ENCODE measurements at regions of chr19 and their contacts with region 1.

Region 1: DNA sequence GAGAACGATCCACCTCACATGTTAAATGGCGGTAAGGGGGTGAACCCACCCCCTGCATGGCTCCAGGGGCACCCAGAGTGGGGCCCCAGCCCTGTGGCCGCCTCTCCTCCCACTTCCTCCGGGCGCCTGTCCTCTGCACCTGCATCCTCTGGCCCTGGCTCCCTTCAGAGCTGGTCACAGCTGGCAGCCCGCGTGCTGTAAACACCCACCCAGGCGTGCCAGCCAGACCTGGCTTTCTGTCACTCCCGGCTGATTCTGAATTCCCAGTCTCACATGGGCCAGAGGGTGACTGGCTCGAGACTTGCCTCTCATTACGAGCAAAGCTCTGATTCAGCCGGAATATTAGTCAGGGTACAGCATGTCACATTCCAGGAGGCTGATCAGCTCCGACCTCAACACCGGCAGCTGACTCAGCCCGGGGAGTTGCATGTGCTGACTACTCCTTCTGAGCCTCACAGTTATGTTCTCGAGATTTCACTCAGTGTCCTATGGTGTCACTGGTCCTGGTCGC is 75.1 kb downstream of the GNG7 start:
- DNase-seq: peak; percentile 88
- ATAC-seq: peak; percentile 62
- H3K4me3 ChIP-seq: peak overlapping the region in 4 of 5 experiments; percentile 13 to 47 (median 24)
- H3K4me3 Mint-ChIP-seq: peak overlapping the region; percentile 86
- H3K27ac ChIP-seq: peak overlapping the region; percentile 96 to 97
- H3K27ac Mint-ChIP-seq: peak overlapping the region; percentile 98
- H3K4me1 ChIP-seq: peaks cover 93 to 99% of the 10 kb centered on the region in 2 donors
- H3K4me1 Mint-ChIP-seq: peaks cover 90% of the 10 kb centered on the region
- H3K27me3 ChIP-seq: no peaks in the 10 kb centered on the region
- H3K27me3 Mint-ChIP-seq: no peaks in the 10 kb centered on the region
- CTCF ChIP-seq: no peak

Region 2: GRCh38 chr19:1384478-1385110 is 1242.8 kb before region 1 on chr19:
- CTCF ChIA-PET with region 1: no interaction called
- POLR2A ChIA-PET with region 1: no interaction called
- intact Hi-C with region 1: no loop called
- DNase-seq: peak; percentile 49
- ATAC-seq: no peak
- H3K4me3 ChIP-seq: peak overlapping the region; percentile 17 to 93 (median 76)
- H3K4me3 Mint-ChIP-seq: peak overlapping the region; percentile 90
- H3K27ac ChIP-seq: peak overlapping the region; percentile 44 to 85
- H3K27ac Mint-ChIP-seq: peak overlapping the region; percentile 22
- H3K4me1 ChIP-seq: peaks cover 11 to 15% of the 10 kb centered on the region in 2 donors
- H3K4me1 Mint-ChIP-seq: peaks cover 17% of the 10 kb centered on the region
- H3K27me3 ChIP-seq: no peaks in the 10 kb centered on the region
- H3K27me3 Mint-ChIP-seq: peaks cover 3% of the 10 kb centered on the region
- CTCF ChIP-seq: no peak

Region 3: GRCh38 chr19:2084993-2085720 is 542.2 kb before region 1 on chr19:
- CTCF ChIA-PET with region 1: no interaction called
- POLR2A ChIA-PET with region 1: interaction called, 4 read pairs
- intact Hi-C with region 1: loop called (anchors 10 kb)
- DNase-seq: peak; percentile 97
- ATAC-seq: peak; percentile 29
- H3K4me3 ChIP-seq: peak overlapping the region; percentile 87 to 100 (median 98)
- H3K4me3 Mint-ChIP-seq: peak overlapping the region; percentile 92
- H3K27ac ChIP-seq: peak overlapping the region; percentile 96 to 99
- H3K27ac Mint-ChIP-seq: peak overlapping the region; percentile 99
- H3K4me1 ChIP-seq: peaks cover 74 to 81% of the 10 kb centered on the region in 2 donors
- H3K4me1 Mint-ChIP-seq: peaks cover 79% of the 10 kb centered on the region
- H3K27me3 ChIP-seq: no peaks in the 10 kb centered on the region
- H3K27me3 Mint-ChIP-seq: no peaks in the 10 kb centered on the region
- CTCF ChIP-seq: no peak

Region 4: GRCh38 chr19:2269244-2269947 is 358.0 kb before region 1 on chr19:
- CTCF ChIA-PET with region 1: no interaction called
- POLR2A ChIA-PET with region 1: interaction called, 6 read pairs
- intact Hi-C with region 1: loop called (anchors 10 kb)
- DNase-seq: peak; percentile 99
- ATAC-seq: peak; percentile 66
- H3K4me3 ChIP-seq: peak overlapping the region; percentile 59 to 100 (median 99)
- H3K4me3 Mint-ChIP-seq: peak overlapping the region; percentile 89
- H3K27ac ChIP-seq: peak overlapping the region; percentile 79 to 94
- H3K27ac Mint-ChIP-seq: peak overlapping the region; percentile 97
- H3K4me1 ChIP-seq: peaks cover 56 to 66% of the 10 kb centered on the region in 2 donors
- H3K4me1 Mint-ChIP-seq: peaks cover 52% of the 10 kb centered on the region
- H3K27me3 ChIP-seq: no peaks in the 10 kb centered on the region
- H3K27me3 Mint-ChIP-seq: no peaks in the 10 kb centered on the region
- CTCF ChIP-seq: no peak

Region 5: GRCh38 chr19:2678043-2678671 is 50.8 kb after region 1 on chr19:
- CTCF ChIA-PET with region 1: interaction called, 3 read pairs
- POLR2A ChIA-PET with region 1: interaction called, 21 read pairs
- intact Hi-C with region 1: loop called (anchors 2 kb)
- DNase-seq: peak; percentile 91
- ATAC-seq: peak; percentile 59
- H3K4me3 ChIP-seq: no peak overlapping the region
- H3K4me3 Mint-ChIP-seq: peak overlapping the region; percentile 49
- H3K27ac ChIP-seq: peak overlapping the region; percentile 99 to 100
- H3K27ac Mint-ChIP-seq: peak overlapping the region; percentile 88
- H3K4me1 ChIP-seq: peaks cover 56 to 66% of the 10 kb centered on the region in 2 donors
- H3K4me1 Mint-ChIP-seq: peaks cover 70% of the 10 kb centered on the region
- H3K27me3 ChIP-seq: no peaks in the 10 kb centered on the region
- H3K27me3 Mint-ChIP-seq: no peaks in the 10 kb centered on the region
- CTCF ChIP-seq: no peak

Region 6: DNA sequence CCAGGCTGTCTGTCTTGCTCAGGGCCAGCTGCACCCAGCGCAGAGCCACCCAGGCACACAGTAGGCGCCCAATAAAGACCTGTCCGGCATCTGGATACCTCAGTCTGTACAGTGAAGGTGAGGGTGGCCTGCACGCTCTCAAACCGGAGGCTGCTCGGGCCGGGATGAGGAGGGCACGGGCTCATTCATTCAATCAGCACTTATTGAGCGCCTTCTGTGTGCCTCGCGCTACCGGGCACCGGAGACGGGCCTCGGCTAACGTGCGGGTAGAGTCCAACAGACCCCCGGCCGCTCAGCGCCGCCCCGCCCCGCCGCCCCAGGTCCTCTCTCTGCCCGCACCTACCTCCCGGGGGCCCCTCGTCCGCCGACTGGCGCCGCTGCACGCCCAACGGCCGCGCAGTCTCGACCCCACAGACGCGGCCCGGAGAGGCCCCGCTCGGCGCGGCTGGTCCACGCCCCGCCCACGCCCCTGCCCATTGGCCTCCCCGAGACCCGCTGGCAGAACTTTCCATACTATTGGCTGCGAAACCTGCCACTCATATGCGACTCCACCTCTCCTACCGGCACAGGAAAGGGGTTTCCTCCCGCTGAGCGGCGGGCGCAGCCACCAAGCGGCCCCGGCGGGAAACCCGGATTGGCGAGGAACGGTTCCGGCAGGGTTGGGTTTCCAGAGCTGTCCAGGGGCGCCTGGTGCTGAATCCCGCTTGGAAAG is 112.4 kb after region 1 on chr19 and contains the start of gene SLC39A3:
- CTCF ChIA-PET with region 1: no interaction called
- POLR2A ChIA-PET with region 1: no interaction called
- intact Hi-C with region 1: no loop called
- DNase-seq: peak; percentile 98
- ATAC-seq: peak; percentile 100
- H3K4me3 ChIP-seq: peak within 1 kb of the TSS; percentile 50 to 93 (median 87)
- H3K4me3 Mint-ChIP-seq: peak within 1 kb of the TSS; percentile 92
- H3K27ac ChIP-seq: peak within 1 kb of the TSS; percentile 26 to 77
- H3K27ac Mint-ChIP-seq: peak within 1 kb of the TSS; percentile 81
- H3K4me1 ChIP-seq: peaks cover 10 to 20% of the 10 kb centered on the region in 2 donors
- H3K4me1 Mint-ChIP-seq: peaks cover 25% of the 10 kb centered on the region
- H3K27me3 ChIP-seq: no peaks in the 10 kb centered on the region
- H3K27me3 Mint-ChIP-seq: peaks cover 10% of the 10 kb centered on the region
- CTCF ChIP-seq: no peak
- total RNA-seq, gene SLC39A3: 32.8 and 36.4 TPM in 2 replicates

Region 7: DNA sequence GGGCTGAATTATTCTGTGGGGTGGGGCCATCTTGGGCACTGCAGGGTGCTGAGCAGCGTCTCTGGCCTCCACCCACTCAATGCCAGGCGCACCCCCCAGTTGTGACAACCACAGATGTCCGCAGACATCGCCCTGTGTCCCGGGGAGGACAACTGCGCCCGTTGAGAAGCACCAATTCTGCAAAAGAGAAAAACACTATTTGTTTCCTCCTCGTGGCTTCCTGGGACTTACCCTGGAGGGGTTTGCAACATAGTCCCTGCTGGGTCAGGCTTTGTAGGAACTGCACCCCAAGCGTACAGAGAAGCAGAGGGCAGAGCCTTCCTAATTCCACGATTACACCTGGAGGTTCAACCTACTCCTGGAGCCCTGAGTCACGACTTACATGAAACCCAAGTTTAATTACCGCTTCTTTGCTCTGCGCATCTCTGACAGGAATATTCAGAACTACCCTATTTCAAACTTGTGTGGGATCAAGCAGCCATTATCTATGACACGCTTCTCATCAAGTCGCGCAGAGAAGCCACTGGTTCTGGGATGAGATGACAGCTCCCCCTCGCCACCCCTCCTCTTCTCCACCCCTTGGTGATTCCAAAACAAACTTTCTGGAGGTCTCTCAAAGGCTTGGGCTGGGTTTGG is 123.6 kb after region 1 on chr19:
- CTCF ChIA-PET with region 1: no interaction called
- POLR2A ChIA-PET with region 1: no interaction called
- intact Hi-C with region 1: no loop called
- DNase-seq: no peak
- ATAC-seq: no peak
- H3K4me3 ChIP-seq: no peak overlapping the region
- H3K4me3 Mint-ChIP-seq: no peak overlapping the region
- H3K27ac ChIP-seq: no peak overlapping the region
- H3K27ac Mint-ChIP-seq: no peak overlapping the region
- H3K4me1 ChIP-seq: peaks cover 8 to 18% of the 10 kb centered on the region in 2 donors
- H3K4me1 Mint-ChIP-seq: peaks cover 10% of the 10 kb centered on the region
- H3K27me3 ChIP-seq: no peaks in the 10 kb centered on the region
- H3K27me3 Mint-ChIP-seq: no peaks in the 10 kb centered on the region
- CTCF ChIP-seq: no peak

Region 8: GRCh38 chr19:2798733-2799132 is 171.4 kb after region 1 on chr19:
- CTCF ChIA-PET with region 1: no interaction called
- POLR2A ChIA-PET with region 1: no interaction called
- intact Hi-C with region 1: no loop called
- DNase-seq: no peak
- ATAC-seq: no peak
- H3K4me3 ChIP-seq: no peak overlapping the region
- H3K4me3 Mint-ChIP-seq: no peak overlapping the region
- H3K27ac ChIP-seq: no peak overlapping the region
- H3K27ac Mint-ChIP-seq: no peak overlapping the region
- H3K4me1 ChIP-seq: no peaks in the 10 kb centered on the region
- H3K4me1 Mint-ChIP-seq: no peaks in the 10 kb centered on the region
- H3K27me3 ChIP-seq: no peaks in the 10 kb centered on the region
- H3K27me3 Mint-ChIP-seq: no peaks in the 10 kb centered on the region
- CTCF ChIP-seq: no peak